Endothelial cell of umbilical vein (primary cell): ENCODE measurements at regions of chr11 and their contacts with region 1.

Region 1: GRCh38 chr11:34366522-34366921 is 8.7 kb upstream of the ABTB2 start:
- DNase-seq: peak; percentile 14
- H3K4me3 ChIP-seq: no peak overlapping the region
- H3K27ac ChIP-seq: no peak overlapping the region
- H3K4me1 ChIP-seq: no peaks in the 10 kb centered on the region
- H3K27me3 ChIP-seq: peaks cover 6 to 14% of the 10 kb centered on the region in 2 experiments
- CTCF ChIP-seq: no peak
- POLR2A ChIP-seq: no peak

Region 2: DNA sequence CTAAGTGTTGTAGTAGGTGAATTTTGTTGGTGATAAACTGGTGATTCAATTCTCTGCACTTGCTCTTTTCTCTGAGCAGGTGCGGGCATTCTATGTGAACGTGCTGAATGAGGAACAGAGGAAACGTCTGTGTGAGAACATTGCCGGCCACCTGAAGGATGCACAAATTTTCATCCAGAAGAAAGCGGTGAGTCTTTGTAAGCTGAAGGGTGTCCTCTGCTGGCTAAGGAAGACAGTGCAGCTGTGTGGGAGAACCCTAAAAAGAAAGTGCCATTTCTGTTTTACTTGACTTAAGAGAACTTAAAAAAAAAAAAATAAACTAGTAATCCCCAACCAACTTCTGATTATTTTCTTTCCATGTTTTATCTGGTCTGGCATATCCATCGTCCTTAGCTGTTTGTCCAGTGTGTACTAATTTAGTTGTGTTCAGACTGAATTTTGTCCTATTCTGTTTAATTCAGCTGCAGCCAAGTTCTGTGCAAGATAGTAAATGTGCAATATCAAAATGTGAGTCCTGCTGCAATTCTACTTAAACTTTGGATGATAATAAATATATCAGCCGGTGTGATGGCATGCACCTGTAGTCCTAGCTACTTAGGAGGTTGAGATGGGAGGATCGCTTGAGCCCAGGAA is 101.8 kb after region 1 on chr11:
- CTCF ChIA-PET with region 1: interaction called, 12 read pairs
- POLR2A ChIA-PET with region 1: no interaction called
- dilution Hi-C with region 1: no loop called
- intact Hi-C with region 1: no loop called
- DNase-seq: peak; percentile 21
- H3K4me3 ChIP-seq: no peak overlapping the region
- H3K27ac ChIP-seq: no peak overlapping the region
- H3K4me1 ChIP-seq: no peaks in the 10 kb centered on the region
- H3K27me3 ChIP-seq: no peaks in the 10 kb centered on the region
- CTCF ChIP-seq: peak; percentile 30 to 54
- POLR2A ChIP-seq: no peak

Region 3: GRCh38 chr11:34492806-34493414 is 126.4 kb after region 1 on chr11:
- CTCF ChIA-PET with region 1: interaction called, 30 read pairs
- POLR2A ChIA-PET with region 1: no interaction called
- dilution Hi-C with region 1: no loop called
- intact Hi-C with region 1: no loop called
- DNase-seq: peak; percentile 64
- H3K4me3 ChIP-seq: no peak overlapping the region
- H3K27ac ChIP-seq: no peak overlapping the region
- H3K4me1 ChIP-seq: no peaks in the 10 kb centered on the region
- H3K27me3 ChIP-seq: peaks cover 6% of the 10 kb centered on the region in 2 experiments
- CTCF ChIP-seq: peak; percentile 42 to 50
- POLR2A ChIP-seq: no peak